CD8-positive, alpha-beta T cell (primary cell): ENCODE measurements at regions of chr1 and their contacts with region 1.

Region 1: GRCh38 chr1:45097944-45098343 is 85.9 kb downstream of the UROD start:
- DNase-seq: no peak
- ATAC-seq: no peak
- H3K4me3 ChIP-seq: no peak overlapping the region
- H3K4me3 Mint-ChIP-seq: no peak overlapping the region
- H3K27ac ChIP-seq: no peak overlapping the region
- H3K27ac Mint-ChIP-seq: no peak overlapping the region
- H3K4me1 ChIP-seq: no peaks in the 10 kb centered on the region
- H3K4me1 Mint-ChIP-seq: no peaks in the 10 kb centered on the region
- H3K27me3 ChIP-seq: no peaks in the 10 kb centered on the region
- H3K27me3 Mint-ChIP-seq: peaks cover 2% of the 10 kb centered on the region
- CTCF ChIP-seq: no peak

Region 2: DNA sequence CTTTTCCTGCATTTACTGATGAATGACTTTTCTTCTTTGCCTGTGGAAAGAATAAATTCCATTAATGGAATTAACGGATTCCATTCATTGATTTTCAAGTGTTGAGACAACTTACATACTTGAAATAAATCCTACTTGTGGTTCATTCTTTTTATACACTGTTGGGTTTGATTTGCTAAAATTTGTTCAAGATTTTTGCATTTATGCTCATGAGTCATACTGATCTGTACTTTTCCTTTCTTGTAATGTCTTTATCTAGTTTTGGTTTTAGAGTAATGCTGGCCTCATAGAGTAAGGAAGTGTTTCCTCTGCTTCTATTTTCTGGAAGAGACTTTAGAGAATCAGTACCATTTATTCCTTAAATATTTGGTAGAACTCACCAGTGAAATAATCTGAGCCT is 71.5 kb before region 1 on chr1:
- CTCF ChIA-PET with region 1: no interaction called
- POLR2A ChIA-PET with region 1: no interaction called
- intact Hi-C with region 1: no loop called
- DNase-seq: no peak
- ATAC-seq: no peak
- H3K4me3 ChIP-seq: no peak overlapping the region
- H3K4me3 Mint-ChIP-seq: no peak overlapping the region
- H3K27ac ChIP-seq: no peak overlapping the region
- H3K27ac Mint-ChIP-seq: no peak overlapping the region
- H3K4me1 ChIP-seq: no peaks in the 10 kb centered on the region
- H3K4me1 Mint-ChIP-seq: no peaks in the 10 kb centered on the region
- H3K27me3 ChIP-seq: no peaks in the 10 kb centered on the region
- H3K27me3 Mint-ChIP-seq: no peaks in the 10 kb centered on the region
- CTCF ChIP-seq: no peak

Region 3: GRCh38 chr1:45079533-45079932 is 18.4 kb before region 1 on chr1:
- CTCF ChIA-PET with region 1: no interaction called
- POLR2A ChIA-PET with region 1: no interaction called
- intact Hi-C with region 1: loop called in 1 of 2 experiments (anchors 1 kb)
- DNase-seq: no peak
- ATAC-seq: no peak
- H3K4me3 ChIP-seq: no peak overlapping the region
- H3K4me3 Mint-ChIP-seq: no peak overlapping the region
- H3K27ac ChIP-seq: no peak overlapping the region
- H3K27ac Mint-ChIP-seq: no peak overlapping the region
- H3K4me1 ChIP-seq: no peaks in the 10 kb centered on the region
- H3K4me1 Mint-ChIP-seq: peaks cover 2% of the 10 kb centered on the region
- H3K27me3 ChIP-seq: no peaks in the 10 kb centered on the region
- H3K27me3 Mint-ChIP-seq: peaks cover 7% of the 10 kb centered on the region
- CTCF ChIP-seq: no peak